HepG2 (cell line): ENCODE measurements at regions of chr2 and their contacts with region 1.

Region 1: GRCh38 chr2:10122386-10123280 is at the start of gene RRM2:
- DNase-seq: peak; percentile 95
- ATAC-seq: peak; percentile 86
- H3K4me3 ChIP-seq: peak within 1 kb of the TSS; percentile 70 to 99 (median 93)
- H3K27ac ChIP-seq: peak within 1 kb of the TSS; percentile 92
- H3K4me1 ChIP-seq: peaks cover 81% of the 10 kb centered on the region
- H3K27me3 ChIP-seq: no peaks in the 10 kb centered on the region
- CTCF ChIP-seq: peak; percentile 35
- EP300 ChIP-seq: 0 out of 4 replicates have a peak, but pooled peaks of 1 of the 2 experiments have one; percentile 40
- POLR2A ChIP-seq: peak; percentile 99 to 100
- RAD21 ChIP-seq: peak; percentile 49; the same call in 1 of the 2 replicates
- total RNA-seq, gene RRM2: 150 and 191 TPM in 2 replicates

Region 2: GRCh38 chr2:9644603-9645002 is 478.0 kb before region 1 on chr2:
- CTCF ChIA-PET with region 1: no interaction called
- POLR2A ChIA-PET with region 1: no interaction called
- in situ Hi-C with region 1: no loop called
- intact Hi-C with region 1: no loop called
- DNase-seq: no peak
- ATAC-seq: peak; percentile 8; the same call in 1 of the 3 replicates
- H3K4me3 ChIP-seq: no peak overlapping the region
- H3K27ac ChIP-seq: no peak overlapping the region
- H3K4me1 ChIP-seq: peaks cover 33% of the 10 kb centered on the region
- H3K27me3 ChIP-seq: peaks cover 3 to 47% of the 10 kb centered on the region in 2 experiments; a peak in 4 of 5 replicates
- CTCF ChIP-seq: no peak
- EP300 ChIP-seq: no peak
- POLR2A ChIP-seq: no peak
- RAD21 ChIP-seq: no peak

Region 3: DNA sequence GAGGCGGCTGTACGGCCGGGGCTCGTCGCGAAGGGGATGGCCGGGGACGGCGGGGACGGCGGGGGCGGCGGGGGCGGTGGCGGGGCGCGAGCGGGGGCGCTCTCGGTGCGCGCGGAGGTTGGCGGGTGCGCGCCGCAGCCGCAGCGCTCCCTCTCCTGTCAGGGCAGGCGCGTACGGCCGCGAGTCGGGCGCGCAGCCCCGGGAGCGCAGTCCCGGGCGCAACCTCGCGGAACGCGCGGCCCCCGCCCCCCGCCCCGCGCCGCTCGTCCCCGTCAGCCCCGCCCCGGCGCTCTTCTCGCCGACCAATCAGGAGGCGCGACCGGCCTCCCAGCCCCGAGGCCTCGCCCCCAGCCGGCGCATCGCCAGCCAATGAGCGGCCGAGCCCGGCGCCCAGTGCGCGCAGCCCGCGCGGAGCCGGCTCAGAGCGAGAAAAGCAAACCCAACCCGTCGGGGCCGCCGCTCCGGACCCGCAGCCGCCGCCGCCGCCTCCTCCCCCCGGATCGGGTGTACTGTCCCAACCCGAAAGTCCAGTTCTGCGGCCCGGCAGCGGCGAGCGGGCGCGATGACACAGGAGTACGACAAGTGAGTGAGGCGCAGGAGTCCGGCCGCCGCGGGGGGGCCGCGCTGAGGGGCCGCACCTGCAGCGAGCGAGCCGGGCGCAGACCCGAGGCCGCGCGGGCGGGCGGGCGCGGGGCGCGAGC is 171.2 kb before region 1 on chr2 and contains the start of gene GRHL1:
- CTCF ChIA-PET with region 1: no interaction called
- POLR2A ChIA-PET with region 1: no interaction called
- in situ Hi-C with region 1: no loop called
- intact Hi-C with region 1: loop called (anchors 5 kb)
- DNase-seq: peak; percentile 85
- ATAC-seq: peak; percentile 86
- H3K4me3 ChIP-seq: peak within 1 kb of the TSS; percentile 83 to 94 (median 84)
- H3K27ac ChIP-seq: peak within 1 kb of the TSS; percentile 76
- H3K4me1 ChIP-seq: peaks cover 69% of the 10 kb centered on the region
- H3K27me3 ChIP-seq: peaks cover 0 to 9% of the 10 kb centered on the region in 2 experiments; a peak in 1 of 5 replicates
- CTCF ChIP-seq: no peak
- EP300 ChIP-seq: no peak
- POLR2A ChIP-seq: 0 out of 4 replicates have a peak, but pooled peaks of 1 of the 2 experiments have one; percentile 46
- RAD21 ChIP-seq: peak; percentile 56
- total RNA-seq, gene GRHL1: 10.6 and 12.0 TPM in 2 replicates

Region 4: GRCh38 chr2:10072656-10073480 is 49.8 kb before region 1 on chr2:
- CTCF ChIA-PET with region 1: no interaction called
- POLR2A ChIA-PET with region 1: no interaction called
- in situ Hi-C with region 1: loop called (anchors 5 kb)
- intact Hi-C with region 1: loop called (anchors 1 kb)
- DNase-seq: peak; percentile 86
- ATAC-seq: peak; percentile 95
- H3K4me3 ChIP-seq: no peak overlapping the region; a peak in 1 of 6 replicates
- H3K27ac ChIP-seq: no peak overlapping the region
- H3K4me1 ChIP-seq: peaks cover 12% of the 10 kb centered on the region
- H3K27me3 ChIP-seq: peaks cover 8 to 57% of the 10 kb centered on the region in 2 experiments; a peak in 4 of 5 replicates
- CTCF ChIP-seq: peak; percentile 97
- EP300 ChIP-seq: no peak
- POLR2A ChIP-seq: no peak
- RAD21 ChIP-seq: peak; percentile 86

Region 5: DNA sequence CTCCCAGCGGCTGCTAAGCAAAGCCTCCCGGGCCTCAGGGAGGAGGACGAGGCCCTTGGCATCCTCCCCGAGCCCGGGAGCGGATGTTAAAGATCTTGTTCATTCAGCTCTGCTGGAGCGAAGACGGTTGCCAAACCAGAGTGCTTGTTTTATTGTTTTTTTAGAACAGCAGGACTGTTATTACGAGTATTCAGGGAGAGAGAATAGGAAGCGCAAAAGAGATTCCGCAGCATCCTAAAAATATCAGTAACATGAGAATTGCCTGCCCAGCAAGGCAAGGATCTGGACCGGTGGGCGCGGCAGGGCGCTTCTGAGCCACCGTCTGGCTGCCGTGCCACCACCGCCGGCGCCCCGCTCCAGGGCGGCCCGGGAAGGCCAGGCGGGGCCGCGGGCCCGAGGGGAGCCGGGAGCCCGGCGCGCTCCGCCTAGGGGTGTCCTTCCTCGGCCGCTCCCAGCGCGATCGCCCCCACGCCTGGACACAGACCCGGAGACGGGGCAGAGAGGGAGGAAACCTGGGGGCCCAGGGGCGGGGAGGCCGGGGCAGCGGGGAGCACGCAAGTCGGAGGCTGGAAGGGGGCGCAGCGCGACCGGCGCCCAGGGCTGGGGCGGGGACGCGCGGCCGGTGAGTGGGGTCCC is 43.3 kb before region 1 on chr2:
- CTCF ChIA-PET with region 1: no interaction called
- POLR2A ChIA-PET with region 1: no interaction called
- in situ Hi-C with region 1: loop called (anchors 5 kb)
- intact Hi-C with region 1: no loop called
- DNase-seq: no peak
- ATAC-seq: peak; percentile 82
- H3K4me3 ChIP-seq: peak overlapping the region; percentile 56 to 72 (median 59); a peak in 5 of 6 replicates
- H3K27ac ChIP-seq: no peak overlapping the region
- H3K4me1 ChIP-seq: peaks cover 9% of the 10 kb centered on the region; the same call in 1 of the 2 replicates
- H3K27me3 ChIP-seq: peaks cover 10 to 71% of the 10 kb centered on the region in 2 experiments; a peak in 4 of 5 replicates
- CTCF ChIP-seq: no peak
- EP300 ChIP-seq: no peak
- POLR2A ChIP-seq: no peak
- RAD21 ChIP-seq: no peak

Region 6: DNA sequence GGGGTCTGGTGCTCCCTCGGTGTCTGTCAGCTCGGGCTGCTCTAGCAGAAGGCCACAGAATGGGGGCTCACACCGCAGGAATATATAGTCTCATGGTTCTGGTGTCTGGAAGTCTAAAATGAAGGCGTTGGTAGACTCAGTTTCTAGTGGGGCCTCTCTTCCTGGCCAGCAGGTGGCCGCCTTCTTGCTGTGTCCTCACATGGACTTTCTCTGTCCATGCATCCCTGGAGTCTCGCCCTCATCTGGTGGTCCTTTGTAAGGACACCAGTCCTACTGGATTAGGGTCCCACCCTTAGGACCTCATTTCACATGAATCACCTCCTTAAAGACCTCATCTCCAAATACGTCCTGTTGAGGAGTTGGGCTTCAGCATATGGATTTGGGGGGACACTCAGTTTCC is 65.6 kb after region 1 on chr2:
- CTCF ChIA-PET with region 1: interaction called, 6 read pairs
- POLR2A ChIA-PET with region 1: no interaction called
- in situ Hi-C with region 1: no loop called
- intact Hi-C with region 1: loop called (anchors 1 kb)
- DNase-seq: peak; percentile 78
- ATAC-seq: peak; percentile 89
- H3K4me3 ChIP-seq: no peak overlapping the region
- H3K27ac ChIP-seq: no peak overlapping the region
- H3K4me1 ChIP-seq: no peaks in the 10 kb centered on the region
- H3K27me3 ChIP-seq: no peaks in the 10 kb centered on the region
- CTCF ChIP-seq: peak; percentile 64
- EP300 ChIP-seq: no peak
- POLR2A ChIP-seq: no peak
- RAD21 ChIP-seq: peak; percentile 83

Region 7: GRCh38 chr2:10278029-10278762 is 155.6 kb after region 1 on chr2:
- CTCF ChIA-PET with region 1: no interaction called
- POLR2A ChIA-PET with region 1: no interaction called
- in situ Hi-C with region 1: no loop called
- intact Hi-C with region 1: loop called (anchors 10 kb)
- DNase-seq: peak; percentile 87
- ATAC-seq: peak; percentile 69
- H3K4me3 ChIP-seq: peak overlapping the region; percentile 27 to 78 (median 52)
- H3K27ac ChIP-seq: peak overlapping the region; percentile 69
- H3K4me1 ChIP-seq: peaks cover 47% of the 10 kb centered on the region
- H3K27me3 ChIP-seq: peaks cover 3 to 18% of the 10 kb centered on the region in 2 experiments; a peak in 4 of 5 replicates
- CTCF ChIP-seq: peak; percentile 4
- EP300 ChIP-seq: peak in 1 of 2 experiments; percentile 52; a peak in 2 of 4 replicates
- POLR2A ChIP-seq: peak in 1 of 2 experiments; percentile 43; a peak in 1 of 4 replicates
- RAD21 ChIP-seq: no peak

Region 8: DNA sequence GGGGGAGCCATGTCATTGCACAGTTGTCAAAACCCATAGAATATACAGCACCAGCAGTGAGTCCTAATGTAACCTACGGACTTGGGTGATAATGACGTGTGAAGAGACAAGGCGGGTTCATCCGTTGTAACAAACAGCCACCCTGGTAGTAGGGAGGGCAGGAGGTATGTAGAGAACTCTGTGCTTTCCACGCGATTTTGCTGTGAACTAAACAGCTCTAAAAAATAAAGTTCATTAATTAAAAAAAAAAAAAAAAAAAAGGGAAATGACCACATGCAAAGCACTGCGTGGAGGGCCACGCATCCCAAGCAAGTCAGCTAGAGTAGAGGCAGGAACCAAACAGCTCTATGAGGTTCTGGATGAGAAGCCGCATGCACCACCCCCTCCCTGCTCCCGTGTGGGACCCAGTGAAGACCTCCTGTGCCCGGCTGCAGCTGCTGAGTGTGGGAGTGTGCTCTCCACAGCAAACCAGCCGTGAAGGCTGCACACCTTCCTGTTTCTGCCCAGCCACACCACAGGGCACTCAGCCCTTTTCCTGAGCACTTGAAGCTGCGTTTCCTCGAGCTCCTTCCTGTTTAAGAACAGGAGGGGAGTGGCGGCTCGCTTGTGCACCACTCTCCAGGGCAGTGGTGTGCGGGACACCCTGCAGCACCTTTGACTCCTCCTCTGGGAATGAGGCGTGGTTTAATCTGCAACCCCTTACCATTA is 259.9 kb after region 1 on chr2:
- CTCF ChIA-PET with region 1: no interaction called
- POLR2A ChIA-PET with region 1: no interaction called
- in situ Hi-C with region 1: no loop called
- intact Hi-C with region 1: no loop called
- DNase-seq: no peak
- ATAC-seq: no peak
- H3K4me3 ChIP-seq: no peak overlapping the region
- H3K27ac ChIP-seq: no peak overlapping the region
- H3K4me1 ChIP-seq: peaks cover 12% of the 10 kb centered on the region
- H3K27me3 ChIP-seq: no peaks in the 10 kb centered on the region
- CTCF ChIP-seq: no peak
- EP300 ChIP-seq: no peak
- POLR2A ChIP-seq: no peak
- RAD21 ChIP-seq: no peak